PC-9 (cell line): ENCODE measurements at regions of chr15 and their contacts with region 1.

Region 1: GRCh38 chr15:38354315-38354929 is 99.5 kb upstream of the FAM98B start:
- DNase-seq: peak; percentile 41 to 51
- H3K4me3 ChIP-seq: no peak overlapping the region
- H3K27ac ChIP-seq: no peak overlapping the region
- H3K4me1 ChIP-seq: no peaks in the 10 kb centered on the region
- H3K27me3 ChIP-seq: no peaks in the 10 kb centered on the region
- CTCF ChIP-seq: peak; percentile 74

Region 2: DNA sequence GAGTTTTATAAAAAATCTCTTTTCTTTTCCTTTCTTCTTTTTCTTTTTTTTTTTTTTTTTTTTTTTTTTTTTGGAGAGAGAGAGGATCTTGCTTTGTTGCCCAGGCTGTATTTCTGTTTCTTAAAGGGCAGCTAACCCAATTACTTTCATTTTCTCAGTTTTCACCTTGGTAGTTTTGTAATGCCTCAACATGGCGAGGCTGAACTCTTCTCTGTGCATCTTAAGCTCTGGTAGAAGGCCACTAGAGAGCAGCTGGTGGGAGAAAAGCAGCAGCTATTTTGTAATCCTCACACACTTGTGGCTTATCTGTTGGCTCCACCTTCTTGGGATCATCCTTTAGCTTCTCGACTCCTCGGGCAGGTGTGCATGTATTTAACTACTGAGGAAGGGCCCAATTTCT is 1101.9 kb before region 1 on chr15:
- CTCF ChIA-PET with region 1: interaction called, 17 read pairs
- POLR2A ChIA-PET with region 1: no interaction called
- intact Hi-C with region 1: no loop called
- DNase-seq: no peak
- H3K4me3 ChIP-seq: no peak overlapping the region
- H3K27ac ChIP-seq: no peak overlapping the region
- H3K4me1 ChIP-seq: no peaks in the 10 kb centered on the region
- H3K27me3 ChIP-seq: no peaks in the 10 kb centered on the region
- CTCF ChIP-seq: no peak

Region 3: DNA sequence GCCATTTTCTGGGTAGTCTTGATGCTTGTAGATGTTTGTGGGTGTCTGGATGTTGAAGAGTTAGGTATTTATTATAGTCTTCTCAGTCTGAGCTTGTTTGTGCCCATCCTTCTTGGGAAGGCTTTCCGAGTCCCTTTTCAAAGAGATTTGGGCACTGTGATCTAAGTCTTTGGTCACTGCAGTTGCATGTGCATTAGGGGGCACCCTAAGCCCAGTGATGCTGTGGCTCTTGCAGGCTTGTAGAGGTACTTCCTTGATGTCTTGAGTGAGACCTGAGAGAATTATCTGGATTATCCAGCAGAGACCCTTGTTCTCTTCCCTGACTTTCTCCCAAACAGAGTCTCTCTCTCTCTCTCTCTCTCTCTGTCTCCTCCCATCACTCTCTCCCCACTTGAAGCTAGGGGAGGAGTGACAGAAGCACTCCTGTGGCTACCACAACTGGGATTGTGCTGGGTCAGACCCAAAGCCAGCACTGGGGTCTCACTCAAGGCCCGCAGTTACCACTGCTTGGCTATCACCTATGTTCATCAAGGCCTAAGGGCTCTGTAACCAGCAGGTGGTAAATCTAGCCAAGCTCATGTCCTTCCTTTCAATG is 351.4 kb before region 1 on chr15:
- CTCF ChIA-PET with region 1: no interaction called
- POLR2A ChIA-PET with region 1: no interaction called
- intact Hi-C with region 1: loop called (anchors 2 kb)
- DNase-seq: peak; percentile 37 to 46
- H3K4me3 ChIP-seq: no peak overlapping the region
- H3K27ac ChIP-seq: no peak overlapping the region
- H3K4me1 ChIP-seq: no peaks in the 10 kb centered on the region
- H3K27me3 ChIP-seq: no peaks in the 10 kb centered on the region
- CTCF ChIP-seq: peak; percentile 70